CD4-positive, alpha-beta memory T cell (primary cell): ENCODE measurements at regions of chr19 and their contacts with region 1.

Region 1: GRCh38 chr19:22052644-22053013 is 345 bp downstream of the ZNF257 start:
- DNase-seq: no peak
- H3K4me3 ChIP-seq: peak overlapping the region; percentile 61 to 76
- H3K4me3 Mint-ChIP-seq: peak overlapping the region; percentile 92 to 98 (median 96)
- H3K27ac ChIP-seq: peak overlapping the region; percentile 53
- H3K27ac Mint-ChIP-seq: peak overlapping the region; percentile 88 to 95 (median 94)
- H3K4me1 ChIP-seq: no peaks in the 10 kb centered on the region
- H3K4me1 Mint-ChIP-seq: peaks cover 6 to 20% (median 10%) of the 10 kb centered on the region in 4 donors
- H3K27me3 ChIP-seq: no peaks in the 10 kb centered on the region
- H3K27me3 Mint-ChIP-seq: no peaks in the 10 kb centered on the region

Region 2: GRCh38 chr19:21835810-21836444 is 216.7 kb before region 1 on chr19 and contains the start of gene ZNF43:
- CTCF ChIA-PET with region 1: no interaction called
- POLR2A ChIA-PET with region 1: interaction called, 15 read pairs
- intact Hi-C with region 1: no loop called
- DNase-seq: peak; percentile 92 to 95 (median 92)
- H3K4me3 ChIP-seq: peak within 1 kb of the TSS; percentile 73 to 93
- H3K4me3 Mint-ChIP-seq: peak within 1 kb of the TSS; percentile 97 to 99 (median 99)
- H3K27ac ChIP-seq: peak within 1 kb of the TSS; percentile 80
- H3K27ac Mint-ChIP-seq: peak within 1 kb of the TSS; percentile 95 to 99 (median 98)
- H3K4me1 ChIP-seq: peaks cover 16% of the 10 kb centered on the region
- H3K4me1 Mint-ChIP-seq: peaks cover 15 to 44% (median 31%) of the 10 kb centered on the region in 4 donors
- H3K27me3 ChIP-seq: no peaks in the 10 kb centered on the region
- H3K27me3 Mint-ChIP-seq: no peaks in the 10 kb centered on the region
- total RNA-seq, gene ZNF43: 27.6 to 31.9 TPM

Region 3: DNA sequence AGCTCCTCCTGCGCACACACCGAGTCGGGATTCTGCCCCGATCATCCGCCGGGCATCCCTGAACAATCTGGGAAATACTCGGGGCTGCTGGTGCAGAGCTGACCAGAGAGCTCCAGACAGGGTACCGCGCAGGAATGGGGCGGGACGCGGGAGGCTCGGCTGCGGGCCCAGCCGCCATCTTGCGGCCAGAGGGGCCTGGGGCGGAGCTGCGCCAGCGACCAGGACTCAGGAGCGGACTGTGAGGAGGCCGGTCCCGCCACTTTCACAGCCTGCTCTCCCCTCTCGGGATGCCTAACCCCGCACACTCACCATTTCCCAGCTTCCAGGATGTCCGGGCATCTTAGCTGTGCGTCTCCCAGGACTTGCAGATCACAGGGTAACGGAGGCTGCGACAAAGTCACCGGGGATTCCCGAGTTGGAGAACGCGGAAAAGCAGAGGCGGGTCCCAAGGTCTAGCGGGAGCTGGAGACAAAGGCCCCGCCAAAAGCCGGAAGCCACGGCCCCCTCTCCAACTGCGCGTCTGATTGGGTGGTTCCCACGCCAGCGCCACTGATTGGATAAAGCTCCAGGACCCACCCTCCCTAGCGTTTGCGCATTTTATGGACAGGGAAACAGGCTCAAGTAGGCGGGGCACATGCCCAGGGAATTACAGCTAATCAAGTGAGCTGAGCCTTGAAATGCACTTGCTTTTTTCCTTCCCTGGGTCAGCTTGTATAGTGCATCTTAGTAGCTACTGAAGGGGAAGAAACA is 200.9 kb before region 1 on chr19:
- CTCF ChIA-PET with region 1: no interaction called
- POLR2A ChIA-PET with region 1: interaction called, 6 read pairs
- intact Hi-C with region 1: loop called (anchors 10 kb)
- DNase-seq: peak; percentile 87 to 93 (median 87)
- H3K4me3 ChIP-seq: peak overlapping the region; percentile 7 to 91
- H3K4me3 Mint-ChIP-seq: peak overlapping the region; percentile 93 to 98 (median 94)
- H3K27ac ChIP-seq: peak overlapping the region; percentile 83
- H3K27ac Mint-ChIP-seq: peak overlapping the region; percentile 89 to 95 (median 94)
- H3K4me1 ChIP-seq: peaks cover 10% of the 10 kb centered on the region
- H3K4me1 Mint-ChIP-seq: peaks cover 13 to 29% (median 20%) of the 10 kb centered on the region in 4 donors
- H3K27me3 ChIP-seq: no peaks in the 10 kb centered on the region
- H3K27me3 Mint-ChIP-seq: peaks cover 0 to 1% of the 10 kb centered on the region in 2 donors